ENCODE measurements at regions of chr1 and their contacts with region 1.

Region 1: GRCh38 chr1:84944767-84945486 is 51.9 kb upstream of the LPAR3 start:
- DNase-seq: peak; percentile 81
- ATAC-seq: peak; percentile 91
- H3K4me3 ChIP-seq: no peak overlapping the region
- H3K27ac ChIP-seq: peak overlapping the region; percentile 67
- H3K4me1 ChIP-seq: peaks cover 20% of the 10 kb centered on the region
- H3K27me3 ChIP-seq: no peaks in the 10 kb centered on the region
- CTCF ChIP-seq: peak; percentile 78 to 86 (median 84)
- EP300 ChIP-seq: 0 out of 4 replicates have a peak, but pooled peaks of 1 of the 2 experiments have one; percentile 3
- POLR2A ChIP-seq: no peak
- RAD21 ChIP-seq: peak; percentile 92

Region 2: GRCh38 chr1:84753516-84754385 is 191.2 kb before region 1 on chr1:
- CTCF ChIA-PET with region 1: no interaction called
- POLR2A ChIA-PET with region 1: no interaction called
- RAD21 ChIA-PET with region 1: no interaction called
- SMC1A ChIA-PET with region 1: no interaction called
- in situ Hi-C with region 1: no loop called
- intact Hi-C with region 1: no loop called
- DNase-seq: peak; percentile 23
- ATAC-seq: peak; percentile 96
- H3K4me3 ChIP-seq: no peak overlapping the region
- H3K27ac ChIP-seq: no peak overlapping the region
- H3K4me1 ChIP-seq: no peaks in the 10 kb centered on the region
- H3K27me3 ChIP-seq: no peaks in the 10 kb centered on the region
- CTCF ChIP-seq: peak; percentile 90 to 93 (median 92)
- EP300 ChIP-seq: no peak
- POLR2A ChIP-seq: no peak
- RAD21 ChIP-seq: peak; percentile 99

Region 3: DNA sequence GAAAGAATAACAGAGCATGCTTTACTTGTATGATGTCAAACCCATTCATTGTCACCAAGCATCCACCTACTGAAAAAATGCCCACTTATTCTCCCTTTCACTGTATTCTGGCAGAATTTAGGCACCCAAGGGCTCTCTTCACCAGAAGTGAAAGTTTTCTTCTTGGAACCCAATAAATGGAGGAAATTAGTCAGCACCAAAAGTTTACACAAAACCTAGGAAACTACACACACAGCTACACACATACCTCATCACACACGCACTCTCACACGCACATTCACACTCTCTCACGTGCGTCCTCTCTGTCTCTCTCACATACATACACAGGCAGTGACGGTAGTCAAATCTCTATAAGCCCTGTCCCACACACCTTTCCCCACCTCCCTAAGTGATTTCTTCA is 14.4 kb after region 1 on chr1:
- CTCF ChIA-PET with region 1: interaction called, 47 read pairs
- POLR2A ChIA-PET with region 1: interaction called, 12 read pairs
- RAD21 ChIA-PET with region 1: interaction called, 34 read pairs
- SMC1A ChIA-PET with region 1: interaction called, 75 read pairs
- in situ Hi-C with region 1: no loop called
- intact Hi-C with region 1: loop called (anchors 2 kb)
- DNase-seq: peak; percentile 68
- ATAC-seq: peak; percentile 94
- H3K4me3 ChIP-seq: no peak overlapping the region
- H3K27ac ChIP-seq: peak overlapping the region; percentile 62
- H3K4me1 ChIP-seq: peaks cover 10% of the 10 kb centered on the region
- H3K27me3 ChIP-seq: no peaks in the 10 kb centered on the region
- CTCF ChIP-seq: no peak
- EP300 ChIP-seq: peak; percentile 85 to 91
- POLR2A ChIP-seq: 0 out of 2 replicates have a peak, but pooled peaks have one; percentile 33
- RAD21 ChIP-seq: peak; percentile 21; the same call in 1 of the 2 replicates

Region 4: DNA sequence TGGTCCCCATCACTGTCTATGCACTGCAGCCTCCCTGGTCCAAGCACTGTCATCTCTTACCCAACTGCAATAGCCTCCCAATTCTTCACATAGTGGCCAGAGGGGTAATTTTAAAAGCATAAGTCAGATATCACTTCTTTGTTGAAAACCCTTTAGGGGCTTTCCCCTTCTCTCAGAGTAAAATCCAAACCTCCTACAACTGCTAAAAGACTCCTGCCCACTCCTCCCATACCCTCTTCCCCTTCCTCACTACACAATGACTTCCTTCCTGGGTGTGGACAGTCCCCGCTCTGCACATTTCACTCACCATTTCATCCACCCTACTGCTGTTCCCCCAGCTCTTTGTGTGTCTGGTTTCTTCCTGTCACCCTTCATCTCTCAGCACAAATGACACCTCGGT is 43.7 kb after region 1 on chr1:
- CTCF ChIA-PET with region 1: interaction called, 33 read pairs
- POLR2A ChIA-PET with region 1: interaction called, 6 read pairs
- RAD21 ChIA-PET with region 1: interaction called, 38 read pairs
- SMC1A ChIA-PET with region 1: interaction called, 45 read pairs
- in situ Hi-C with region 1: no loop called
- intact Hi-C with region 1: no loop called
- DNase-seq: no peak
- ATAC-seq: peak; percentile 72
- H3K4me3 ChIP-seq: peak overlapping the region; percentile 62
- H3K27ac ChIP-seq: peak overlapping the region; percentile 77
- H3K4me1 ChIP-seq: peaks cover 23% of the 10 kb centered on the region
- H3K27me3 ChIP-seq: no peaks in the 10 kb centered on the region
- CTCF ChIP-seq: no peak
- EP300 ChIP-seq: peak in 1 of 2 experiments; percentile 47; a peak in 1 of 4 replicates
- POLR2A ChIP-seq: peak; percentile 56; the same call in 1 of the 2 replicates
- RAD21 ChIP-seq: 0 out of 2 replicates have a peak, but pooled peaks have one; percentile 8

Region 5: DNA sequence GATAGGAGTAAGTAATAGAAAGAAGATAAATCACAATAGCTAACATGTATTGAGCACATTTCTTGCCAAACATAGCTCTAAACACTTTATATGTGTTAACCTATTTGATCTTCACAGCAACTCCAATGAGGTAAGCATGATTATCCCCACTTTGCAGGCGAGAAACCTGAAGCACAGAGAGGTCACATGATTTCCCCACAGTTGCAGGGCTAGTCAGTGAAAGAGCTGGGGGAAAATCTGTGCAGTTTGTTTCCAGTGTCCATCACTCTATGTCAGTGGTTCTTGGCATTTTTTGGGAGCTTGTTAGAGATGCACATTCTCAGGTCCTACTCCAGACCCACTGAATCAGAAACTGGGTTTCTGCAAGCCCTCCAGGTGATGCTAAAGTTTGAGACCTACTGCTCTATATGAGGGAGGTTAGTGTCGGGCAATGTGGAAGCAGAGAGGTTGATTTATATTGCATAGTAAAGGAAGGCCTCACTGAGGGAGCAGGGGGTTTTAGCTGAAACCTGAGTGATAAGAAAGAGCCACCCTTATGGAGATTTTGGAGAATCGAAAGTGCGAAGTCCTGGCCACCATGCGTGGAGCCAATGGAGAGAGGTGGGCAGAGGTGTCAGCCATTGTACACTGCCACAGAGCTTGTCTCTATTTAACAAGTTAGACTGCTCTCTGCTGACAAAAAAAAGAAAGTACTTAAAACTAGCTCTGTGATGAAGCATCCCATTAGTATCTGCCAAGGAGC is 82.5 kb after region 1 on chr1:
- CTCF ChIA-PET with region 1: interaction called, 319 read pairs
- POLR2A ChIA-PET with region 1: interaction called, 18 read pairs
- RAD21 ChIA-PET with region 1: interaction called, 209 read pairs
- SMC1A ChIA-PET with region 1: interaction called, 214 read pairs
- in situ Hi-C with region 1: loop called (anchors 5 kb)
- intact Hi-C with region 1: loop called (anchors 1 kb)
- DNase-seq: no peak
- ATAC-seq: peak; percentile 96
- H3K4me3 ChIP-seq: no peak overlapping the region
- H3K27ac ChIP-seq: no peak overlapping the region
- H3K4me1 ChIP-seq: no peaks in the 10 kb centered on the region
- H3K27me3 ChIP-seq: no peaks in the 10 kb centered on the region
- CTCF ChIP-seq: peak; percentile 31 to 62 (median 33); a peak in 4 of 6 replicates
- EP300 ChIP-seq: no peak
- POLR2A ChIP-seq: no peak
- RAD21 ChIP-seq: peak; percentile 72

Region 6: DNA sequence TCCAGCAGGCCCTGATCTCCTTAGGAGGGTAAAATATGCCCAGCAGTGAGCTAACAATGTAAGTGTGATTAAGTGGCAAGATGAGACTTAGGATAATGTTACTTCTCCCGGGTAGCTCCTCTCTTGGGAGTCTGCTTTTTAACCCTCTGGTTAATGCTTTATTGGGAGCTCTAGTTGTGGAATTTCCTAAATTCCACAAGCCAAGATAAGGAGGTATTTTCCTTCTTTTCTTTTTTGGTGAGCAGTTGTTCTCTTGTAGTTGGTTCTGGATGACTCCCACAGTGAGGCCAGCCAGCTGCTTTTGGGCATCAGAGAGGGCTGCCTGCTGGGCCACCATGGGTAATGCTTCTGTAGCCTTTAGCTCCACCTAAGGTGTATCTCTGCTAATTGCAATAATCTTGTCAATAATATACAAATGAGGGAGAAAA is 295.3 kb after region 1 on chr1:
- CTCF ChIA-PET with region 1: interaction called, 13 read pairs
- POLR2A ChIA-PET with region 1: no interaction called
- RAD21 ChIA-PET with region 1: interaction called, 7 read pairs
- SMC1A ChIA-PET with region 1: no interaction called
- in situ Hi-C with region 1: no loop called
- intact Hi-C with region 1: no loop called
- DNase-seq: no peak
- ATAC-seq: peak; percentile 85
- H3K4me3 ChIP-seq: no peak overlapping the region
- H3K27ac ChIP-seq: no peak overlapping the region
- H3K4me1 ChIP-seq: no peaks in the 10 kb centered on the region
- H3K27me3 ChIP-seq: no peaks in the 10 kb centered on the region
- CTCF ChIP-seq: peak; percentile 12 to 45 (median 35); a peak in 5 of 6 replicates
- EP300 ChIP-seq: no peak
- POLR2A ChIP-seq: no peak
- RAD21 ChIP-seq: peak; percentile 66

Region 7: GRCh38 chr1:85268801-85269585 is 324.1 kb after region 1 on chr1:
- CTCF ChIA-PET with region 1: interaction called, 15 read pairs
- POLR2A ChIA-PET with region 1: no interaction called
- RAD21 ChIA-PET with region 1: no interaction called
- SMC1A ChIA-PET with region 1: interaction called, 3 read pairs
- in situ Hi-C with region 1: no loop called
- intact Hi-C with region 1: no loop called
- DNase-seq: no peak
- ATAC-seq: no peak
- H3K4me3 ChIP-seq: no peak overlapping the region
- H3K27ac ChIP-seq: no peak overlapping the region
- H3K4me1 ChIP-seq: no peaks in the 10 kb centered on the region
- H3K27me3 ChIP-seq: no peaks in the 10 kb centered on the region
- CTCF ChIP-seq: no peak
- EP300 ChIP-seq: no peak
- POLR2A ChIP-seq: no peak
- RAD21 ChIP-seq: no peak